Activated T-helper 1 cell treated with anti-CD3 and anti-CD28 coated beads, Interleukin-12 subunit alpha, Interleukin-12 subunit beta, Interleukin-2, Interleukin-4 antibody, amounts not matched to agents 30 ng/mL and 10 ng/mL and 1 ng/mL, durations not matched to agents 14 hours and 24 hours and 36 hours (primary cell): ENCODE measurements at regions of chr5 and their contacts with region 1.

Region 1: DNA sequence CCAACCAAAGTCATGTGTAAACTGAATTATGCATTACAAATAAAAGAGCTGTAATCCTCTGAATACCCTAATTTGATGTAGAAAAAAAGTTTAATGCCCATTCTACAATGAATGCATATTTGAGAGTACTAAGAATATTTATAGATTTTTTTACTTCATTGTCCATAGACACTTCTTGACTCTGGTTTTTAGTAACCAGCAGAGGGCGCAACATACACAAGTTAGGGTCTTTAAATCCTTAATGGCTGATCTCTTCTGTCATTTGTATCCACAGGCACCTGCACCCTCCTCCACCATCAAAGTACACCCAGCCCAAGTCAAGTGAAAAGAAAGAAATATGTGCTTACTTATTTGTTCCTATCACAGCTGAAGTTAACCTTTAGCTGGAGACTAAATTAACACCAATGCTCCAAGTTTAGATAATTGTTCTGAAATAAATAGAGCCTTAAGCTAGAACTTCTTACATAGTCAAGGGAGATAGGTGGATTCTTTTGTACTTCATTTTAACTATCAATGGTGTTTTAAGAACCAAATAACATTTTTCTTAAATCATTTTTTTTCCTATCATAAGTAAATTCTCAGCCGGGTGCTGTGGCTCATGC is 524.2 kb upstream of the DAB2 start:
- DNase-seq: peak; percentile 46
- H3K4me3 Mint-ChIP-seq: no peak overlapping the region
- H3K27ac Mint-ChIP-seq: peak overlapping the region; percentile 7
- H3K4me1 Mint-ChIP-seq: peaks cover 6% of the 10 kb centered on the region
- H3K27me3 Mint-ChIP-seq: peaks cover 5% of the 10 kb centered on the region

Region 2: GRCh38 chr5:39714036-39714698 is 234.8 kb before region 1 on chr5:
- intact Hi-C with region 1: loop called (anchors 2 kb)
- DNase-seq: no peak
- H3K4me3 Mint-ChIP-seq: no peak overlapping the region
- H3K27ac Mint-ChIP-seq: no peak overlapping the region
- H3K4me1 Mint-ChIP-seq: no peaks in the 10 kb centered on the region
- H3K27me3 Mint-ChIP-seq: peaks cover 5% of the 10 kb centered on the region

Region 3: GRCh38 chr5:39892708-39893107 is 56.3 kb before region 1 on chr5:
- intact Hi-C with region 1: no loop called
- DNase-seq: no peak
- H3K4me3 Mint-ChIP-seq: no peak overlapping the region
- H3K27ac Mint-ChIP-seq: no peak overlapping the region
- H3K4me1 Mint-ChIP-seq: no peaks in the 10 kb centered on the region
- H3K27me3 Mint-ChIP-seq: peaks cover 6% of the 10 kb centered on the region

Region 4: GRCh38 chr5:39919876-39920275 is 29.1 kb before region 1 on chr5:
- intact Hi-C with region 1: no loop called
- DNase-seq: no peak
- H3K4me3 Mint-ChIP-seq: no peak overlapping the region
- H3K27ac Mint-ChIP-seq: no peak overlapping the region
- H3K4me1 Mint-ChIP-seq: no peaks in the 10 kb centered on the region
- H3K27me3 Mint-ChIP-seq: no peaks in the 10 kb centered on the region

Region 5: DNA sequence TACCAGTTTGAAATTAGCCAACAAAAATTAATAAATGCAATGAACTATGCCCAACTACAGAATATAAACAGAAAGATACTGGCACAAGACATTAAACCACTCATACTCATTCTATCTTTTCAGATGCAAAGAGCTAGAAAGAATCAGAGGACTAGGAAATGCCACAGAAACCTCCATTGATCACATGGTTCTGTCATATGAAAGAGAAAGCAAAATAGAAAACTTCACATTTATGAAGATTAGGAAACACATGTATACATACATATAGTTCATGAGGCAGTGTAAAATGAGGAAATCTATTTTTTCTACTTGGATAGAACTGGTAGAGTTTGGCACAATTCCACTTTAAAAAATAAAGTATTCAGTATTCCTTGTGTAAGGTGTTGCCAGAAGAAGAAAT is 455.6 kb after region 1 on chr5:
- intact Hi-C with region 1: loop called (anchors 5 kb)
- DNase-seq: peak; percentile 12
- H3K4me3 Mint-ChIP-seq: peak overlapping the region; percentile 59
- H3K27ac Mint-ChIP-seq: peak overlapping the region; percentile 99
- H3K4me1 Mint-ChIP-seq: peaks cover 86% of the 10 kb centered on the region
- H3K27me3 Mint-ChIP-seq: no peaks in the 10 kb centered on the region

Region 6: DNA sequence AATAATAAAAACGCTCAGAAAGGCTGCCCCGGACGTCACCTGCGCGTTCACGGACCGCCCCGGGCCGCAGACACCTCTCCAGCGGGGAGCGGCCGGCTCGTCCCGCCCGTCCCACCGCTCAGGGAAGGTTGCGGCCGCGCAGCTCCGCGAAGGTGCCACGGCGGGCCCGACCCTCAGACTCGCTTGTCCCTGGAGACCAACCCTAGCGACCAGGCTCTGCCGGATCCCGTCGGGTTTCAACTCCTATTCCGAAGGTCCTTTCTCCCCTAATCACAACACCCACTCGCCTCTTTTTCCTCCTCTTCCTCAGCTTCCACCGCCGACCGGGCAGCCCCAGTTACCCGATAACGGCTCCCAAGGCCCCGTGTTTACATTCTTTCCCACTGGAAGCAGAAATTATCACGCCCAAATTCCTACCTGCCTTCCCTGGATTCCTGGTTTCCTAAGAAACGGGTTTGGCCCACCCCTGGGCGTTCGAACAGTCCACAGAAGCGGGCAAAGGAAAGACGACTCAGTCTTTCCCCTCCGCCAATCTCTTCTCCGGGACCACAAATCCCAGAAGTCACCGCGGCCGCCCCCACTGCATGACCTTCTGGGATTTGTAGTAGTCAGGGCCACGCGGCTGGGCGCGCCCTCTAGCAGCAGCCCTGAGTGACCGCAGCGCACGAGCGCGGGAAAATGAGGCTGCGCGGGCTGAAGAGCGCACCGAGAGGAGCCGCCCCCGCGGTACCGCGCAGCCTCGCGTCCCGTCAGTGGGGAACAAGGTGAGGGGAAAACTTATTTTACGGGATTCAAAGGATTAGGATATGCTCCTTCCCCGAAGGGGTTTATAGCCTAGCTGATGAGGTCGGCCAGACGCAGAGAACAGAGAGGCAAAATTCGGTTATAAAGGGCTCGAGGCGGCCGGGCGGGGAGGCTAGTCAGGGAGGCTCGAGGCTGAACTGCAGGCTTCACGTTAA is 806.7 kb after region 1 on chr5 and contains the start of gene TTC33:
- intact Hi-C with region 1: loop called (anchors 5 kb)
- DNase-seq: peak; percentile 92
- H3K4me3 Mint-ChIP-seq: no peak within 1 kb of the TSS
- H3K27ac Mint-ChIP-seq: peak within 1 kb of the TSS; percentile 41
- H3K4me1 Mint-ChIP-seq: peaks cover 21% of the 10 kb centered on the region
- H3K27me3 Mint-ChIP-seq: no peaks in the 10 kb centered on the region
- total RNA-seq, gene TTC33: 23.4 and 24.6 TPM in 2 replicates